IMR-90 (cell line): ENCODE measurements at regions of chr17 and their contacts with region 1.

Region 1: DNA sequence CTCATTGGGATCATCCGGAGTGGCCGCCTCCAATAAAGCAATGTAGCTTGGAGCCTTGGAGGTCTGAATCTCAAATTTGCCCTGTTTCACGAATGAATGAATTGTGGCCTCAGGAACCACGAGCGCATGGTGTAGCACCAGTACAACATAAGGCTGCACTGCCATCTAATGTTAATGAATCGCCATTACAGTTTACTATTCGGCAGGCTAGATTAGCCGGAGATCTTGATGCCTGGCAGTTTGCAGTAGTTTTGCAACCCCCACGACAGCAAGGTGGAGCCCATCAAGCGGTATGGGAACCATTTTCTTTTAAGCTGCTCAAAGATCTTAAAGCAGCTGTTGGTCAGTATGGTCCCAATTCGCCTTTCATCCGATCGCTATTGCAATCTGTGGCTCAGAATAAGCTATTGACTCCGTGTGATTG is 18.8 kb downstream of the ALOX15B start:
- DNase-seq: peak; percentile 75
- ATAC-seq: peak; percentile 94
- H3K4me3 ChIP-seq: no peak overlapping the region
- H3K27ac ChIP-seq: no peak overlapping the region
- H3K4me1 ChIP-seq: peaks cover 2% of the 10 kb centered on the region; the same call in 1 of the 2 replicates
- H3K27me3 ChIP-seq: peaks cover 47% of the 10 kb centered on the region
- CTCF ChIP-seq: peak; percentile 86
- POLR2A ChIP-seq: 0 out of 2 replicates have a peak, but pooled peaks have one; percentile 36
- RAD21 ChIP-seq: peak; percentile 86

Region 2: GRCh38 chr17:7703584-7704479 is 353.9 kb before region 1 on chr17:
- CTCF ChIA-PET with region 1: no interaction called
- POLR2A ChIA-PET with region 1: no interaction called
- dilution Hi-C with region 1: no loop called
- in situ Hi-C with region 1: no loop called
- intact Hi-C with region 1: no loop called
- DNase-seq: no peak
- ATAC-seq: no peak
- H3K4me3 ChIP-seq: no peak overlapping the region
- H3K27ac ChIP-seq: no peak overlapping the region
- H3K4me1 ChIP-seq: peaks cover 3% of the 10 kb centered on the region; the same call in 1 of the 2 replicates
- H3K27me3 ChIP-seq: peaks cover 41% of the 10 kb centered on the region
- CTCF ChIP-seq: no peak
- POLR2A ChIP-seq: no peak
- RAD21 ChIP-seq: no peak

Region 3: GRCh38 chr17:7740481-7741001 is 317.2 kb before region 1 on chr17:
- CTCF ChIA-PET with region 1: no interaction called
- POLR2A ChIA-PET with region 1: no interaction called
- dilution Hi-C with region 1: no loop called
- in situ Hi-C with region 1: no loop called
- intact Hi-C with region 1: loop called (anchors 1 kb)
- DNase-seq: no peak
- ATAC-seq: no peak
- H3K4me3 ChIP-seq: no peak overlapping the region
- H3K27ac ChIP-seq: no peak overlapping the region
- H3K4me1 ChIP-seq: peaks cover 5% of the 10 kb centered on the region; the same call in 1 of the 2 replicates
- H3K27me3 ChIP-seq: peaks cover 43% of the 10 kb centered on the region
- CTCF ChIP-seq: no peak
- POLR2A ChIP-seq: no peak
- RAD21 ChIP-seq: no peak

Region 4: DNA sequence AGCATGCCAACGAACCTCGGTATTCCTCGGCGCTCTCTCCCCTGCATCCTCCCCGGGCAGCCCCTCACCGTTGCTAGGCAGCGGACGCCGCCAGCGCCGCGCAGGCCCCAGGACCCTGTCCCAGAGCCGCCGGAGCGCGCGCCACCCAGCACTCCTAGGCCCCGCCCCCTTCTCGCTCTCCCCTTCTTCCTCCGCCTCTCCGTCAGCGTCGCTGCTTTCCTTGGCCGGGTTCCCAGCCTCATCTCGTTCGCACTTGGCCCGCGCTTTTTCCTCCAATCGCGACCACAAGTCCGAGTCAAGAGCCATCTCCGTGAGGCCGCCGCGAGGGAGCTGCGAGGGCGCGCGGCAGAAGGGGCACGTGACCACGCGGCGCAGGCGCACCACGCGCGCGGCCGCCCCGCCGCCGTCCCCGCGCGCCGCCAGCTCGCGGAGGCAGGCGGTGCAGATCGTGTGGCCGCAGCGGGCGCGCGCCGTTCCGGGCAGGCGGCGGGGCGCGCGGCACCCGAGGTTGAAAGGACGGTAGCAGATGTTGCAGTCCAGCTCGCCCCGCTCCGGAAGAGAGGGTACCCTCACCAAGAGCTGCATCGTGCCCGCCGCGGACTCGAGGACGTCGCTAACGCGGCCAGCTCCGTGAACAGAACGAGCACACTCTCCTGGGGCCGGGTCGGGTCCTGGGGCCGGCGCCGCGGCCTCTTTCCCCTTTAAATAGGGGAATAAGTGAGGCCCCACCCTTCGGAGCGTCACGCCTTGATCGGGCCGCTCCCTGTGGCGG is 141.9 kb before region 1 on chr17 and contains the start of gene RNF227:
- CTCF ChIA-PET with region 1: no interaction called
- POLR2A ChIA-PET with region 1: no interaction called
- dilution Hi-C with region 1: no loop called
- in situ Hi-C with region 1: no loop called
- intact Hi-C with region 1: loop called (anchors 1 kb)
- DNase-seq: peak; percentile 96
- ATAC-seq: peak; percentile 84
- H3K4me3 ChIP-seq: peak within 1 kb of the TSS; percentile 61
- H3K27ac ChIP-seq: peak within 1 kb of the TSS; percentile 90
- H3K4me1 ChIP-seq: peaks cover 12% of the 10 kb centered on the region
- H3K27me3 ChIP-seq: no peaks in the 10 kb centered on the region
- CTCF ChIP-seq: no peak
- POLR2A ChIP-seq: peak; percentile 71
- RAD21 ChIP-seq: no peak
- total RNA-seq, gene RNF227: 1.3 and 1.4 TPM in 2 replicates

Region 5: DNA sequence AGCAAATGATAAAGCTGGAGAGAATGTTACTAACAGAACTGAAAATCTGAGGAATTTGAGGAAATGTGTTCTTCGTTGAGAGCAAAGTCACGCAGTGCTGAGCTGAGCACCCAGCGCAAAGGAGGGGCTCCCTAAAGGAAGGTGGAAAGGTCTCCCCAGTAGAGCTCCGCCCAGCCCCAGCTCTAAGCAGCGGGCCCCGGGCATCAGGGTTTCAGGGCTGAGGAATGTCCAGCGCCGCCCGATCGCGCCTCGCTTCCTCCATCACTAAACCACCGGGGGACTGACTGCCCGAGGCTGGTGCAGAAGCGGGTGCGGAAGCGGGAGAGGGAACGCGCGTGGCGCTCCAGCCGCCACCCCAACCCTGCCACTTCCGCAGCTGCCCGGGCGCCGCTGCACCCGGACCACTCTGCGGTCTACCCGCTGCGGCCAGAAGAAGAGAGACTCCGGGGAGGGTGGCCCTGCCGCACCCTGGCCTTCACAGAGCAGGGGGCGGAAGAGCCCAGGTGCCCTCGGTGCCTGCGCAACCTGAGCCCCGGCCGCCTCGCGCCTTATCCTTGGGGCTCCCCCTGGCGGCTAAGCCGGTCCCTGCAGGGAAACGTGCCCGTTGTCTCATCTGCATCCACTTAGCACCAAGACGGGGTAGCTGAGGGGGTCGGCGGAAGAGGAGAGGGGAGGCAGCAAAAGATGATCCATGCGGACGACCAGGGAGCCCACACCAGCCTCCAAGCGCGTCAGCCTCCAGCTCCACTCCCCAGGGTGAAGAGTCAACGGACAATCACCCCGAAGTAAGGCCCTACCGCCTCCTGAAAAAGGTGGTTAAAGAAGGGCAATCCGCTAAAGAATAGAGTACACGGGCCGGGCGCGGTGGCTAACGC is 67.7 kb before region 1 on chr17:
- CTCF ChIA-PET with region 1: no interaction called
- POLR2A ChIA-PET with region 1: no interaction called
- dilution Hi-C with region 1: no loop called
- in situ Hi-C with region 1: no loop called
- intact Hi-C with region 1: loop called (anchors 1 kb)
- DNase-seq: peak; percentile 44
- ATAC-seq: peak; percentile 94
- H3K4me3 ChIP-seq: peak overlapping the region; percentile 59
- H3K27ac ChIP-seq: no peak overlapping the region
- H3K4me1 ChIP-seq: peaks cover 5% of the 10 kb centered on the region; the same call in 1 of the 2 replicates
- H3K27me3 ChIP-seq: peaks cover 11% of the 10 kb centered on the region
- CTCF ChIP-seq: peak; percentile 81
- POLR2A ChIP-seq: no peak
- RAD21 ChIP-seq: peak; percentile 57

Region 6: DNA sequence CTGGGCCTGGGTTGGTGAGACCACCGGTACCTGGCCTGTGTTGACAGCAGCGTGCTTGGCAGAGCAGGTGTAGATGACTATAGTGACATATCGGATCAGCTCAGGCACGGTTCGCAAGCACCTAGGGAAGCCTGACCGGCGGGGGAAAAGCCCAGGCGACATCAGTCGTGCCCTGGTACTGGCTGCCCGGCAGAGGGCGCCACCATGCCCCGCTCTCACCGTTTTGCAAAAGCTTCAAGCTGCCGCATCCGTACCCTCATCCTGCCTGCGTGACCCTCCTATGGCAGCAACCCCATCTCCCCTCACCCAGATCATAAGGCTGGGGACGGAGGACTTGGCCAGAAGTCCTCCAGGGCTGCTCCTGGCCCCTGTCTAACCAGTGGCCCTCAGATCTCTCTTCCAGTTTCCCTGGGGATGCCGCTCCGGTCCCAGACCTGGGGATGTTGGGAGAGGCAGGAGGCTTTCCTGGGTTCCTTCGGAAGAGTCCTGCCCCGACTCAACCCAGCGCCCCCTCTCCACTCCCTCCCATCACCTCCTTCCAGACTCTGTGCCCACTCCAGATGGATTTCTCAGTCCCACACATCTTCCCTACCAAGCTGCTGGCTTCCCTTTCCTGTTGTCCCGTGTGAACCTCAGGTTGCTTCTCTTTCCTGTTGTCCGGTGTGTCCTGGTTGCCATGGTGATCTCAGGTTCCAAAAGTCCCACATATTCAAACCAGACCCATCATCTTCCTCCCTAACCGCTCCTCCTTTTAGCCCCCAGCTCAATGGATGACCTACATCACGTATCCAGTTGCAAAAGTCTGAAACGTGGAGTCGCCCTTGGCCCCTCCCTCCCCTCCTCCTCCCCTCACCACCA is 16.2 kb after region 1 on chr17:
- CTCF ChIA-PET with region 1: interaction called, 16 read pairs
- POLR2A ChIA-PET with region 1: no interaction called
- dilution Hi-C with region 1: no loop called
- in situ Hi-C with region 1: no loop called
- intact Hi-C with region 1: no loop called
- DNase-seq: peak; percentile 49
- ATAC-seq: peak; percentile 91
- H3K4me3 ChIP-seq: no peak overlapping the region
- H3K27ac ChIP-seq: no peak overlapping the region
- H3K4me1 ChIP-seq: no peaks in the 10 kb centered on the region
- H3K27me3 ChIP-seq: peaks cover 82% of the 10 kb centered on the region
- CTCF ChIP-seq: peak; percentile 80
- POLR2A ChIP-seq: no peak
- RAD21 ChIP-seq: peak; percentile 37

Region 7: GRCh38 chr17:8222630-8223356 is 165.1 kb after region 1 on chr17:
- CTCF ChIA-PET with region 1: no interaction called
- POLR2A ChIA-PET with region 1: no interaction called
- dilution Hi-C with region 1: no loop called
- in situ Hi-C with region 1: no loop called
- intact Hi-C with region 1: loop called (anchors 5 kb)
- DNase-seq: peak; percentile 93
- ATAC-seq: peak; percentile 40
- H3K4me3 ChIP-seq: peak overlapping the region; percentile 62
- H3K27ac ChIP-seq: peak overlapping the region; percentile 85
- H3K4me1 ChIP-seq: peaks cover 9% of the 10 kb centered on the region
- H3K27me3 ChIP-seq: no peaks in the 10 kb centered on the region
- CTCF ChIP-seq: no peak
- POLR2A ChIP-seq: peak; percentile 77; the same call in 1 of the 2 replicates
- RAD21 ChIP-seq: no peak

Region 8: GRCh38 chr17:8552577-8553320 is 495.0 kb after region 1 on chr17:
- CTCF ChIA-PET with region 1: no interaction called
- POLR2A ChIA-PET with region 1: no interaction called
- dilution Hi-C with region 1: no loop called
- in situ Hi-C with region 1: no loop called
- intact Hi-C with region 1: no loop called
- DNase-seq: peak; percentile 64
- ATAC-seq: no peak
- H3K4me3 ChIP-seq: no peak overlapping the region
- H3K27ac ChIP-seq: no peak overlapping the region
- H3K4me1 ChIP-seq: peaks cover 5% of the 10 kb centered on the region
- H3K27me3 ChIP-seq: no peaks in the 10 kb centered on the region
- CTCF ChIP-seq: no peak
- POLR2A ChIP-seq: no peak
- RAD21 ChIP-seq: no peak

Region 9: DNA sequence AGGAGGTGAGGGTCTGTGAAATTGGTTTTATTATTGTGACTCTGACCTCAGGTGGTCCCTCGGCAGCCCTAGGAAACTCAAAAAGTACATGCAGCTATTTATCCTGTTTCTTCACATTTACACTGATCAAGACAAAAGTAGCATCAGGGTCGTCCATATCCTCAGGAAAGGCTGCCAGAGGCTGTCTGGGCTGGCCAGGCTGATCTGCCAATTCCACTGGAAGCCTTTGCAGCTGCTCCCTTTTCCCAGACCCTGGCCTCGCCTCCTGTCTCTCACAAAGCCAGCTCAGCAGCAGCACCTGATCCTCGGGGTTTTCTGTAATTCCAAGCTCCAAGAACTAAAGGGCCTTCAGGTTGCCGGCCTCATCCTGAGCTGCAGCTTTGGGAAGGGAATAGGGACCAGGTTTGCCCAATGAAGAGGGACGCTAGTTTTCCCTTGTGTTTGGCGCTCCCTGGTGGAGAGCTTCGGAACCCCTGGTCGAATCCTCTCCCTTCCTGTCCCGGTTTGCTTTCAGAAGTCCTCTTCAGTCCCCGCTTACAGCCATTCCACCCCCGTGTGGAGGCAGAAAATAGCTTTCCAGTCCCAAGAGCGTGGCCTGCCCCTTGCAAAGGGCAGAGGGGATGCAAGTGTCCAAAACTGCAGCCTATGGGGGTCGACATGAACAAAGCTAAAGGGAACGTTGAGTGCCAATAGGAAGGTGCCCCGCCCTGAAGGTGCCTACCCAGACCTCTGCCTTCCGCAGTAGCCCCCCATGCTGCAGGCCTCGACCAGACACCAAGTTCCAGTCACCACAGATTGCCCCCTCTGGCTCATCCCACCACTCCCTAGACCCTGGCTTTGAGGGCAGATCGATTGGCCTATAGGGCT is 728.1 kb after region 1 on chr17:
- CTCF ChIA-PET with region 1: no interaction called
- POLR2A ChIA-PET with region 1: no interaction called
- dilution Hi-C with region 1: no loop called
- in situ Hi-C with region 1: no loop called
- intact Hi-C with region 1: loop called (anchors 10 kb)
- DNase-seq: peak; percentile 56
- ATAC-seq: peak; percentile 98
- H3K4me3 ChIP-seq: no peak overlapping the region
- H3K27ac ChIP-seq: no peak overlapping the region
- H3K4me1 ChIP-seq: no peaks in the 10 kb centered on the region
- H3K27me3 ChIP-seq: no peaks in the 10 kb centered on the region; the same call in 1 of the 2 replicates
- CTCF ChIP-seq: peak; percentile 80
- POLR2A ChIP-seq: no peak
- RAD21 ChIP-seq: peak; percentile 89